H1 (cell line): ENCODE measurements at regions of chr6 and their contacts with region 1.

Region 1: GRCh38 chr6:32933636-32934085 is 7.2 kb downstream of the HLA-DMB start:
- DNase-seq: peak in 1 of 2 experiments; percentile 89
- H3K4me3 ChIP-seq: no peak overlapping the region
- H3K27ac ChIP-seq: no peak overlapping the region
- H3K4me1 ChIP-seq: no peaks in the 10 kb centered on the region
- H3K27me3 ChIP-seq: no peaks in the 10 kb centered on the region
- CTCF ChIP-seq: peak; percentile 75 to 84 (median 82)
- EP300 ChIP-seq: no peak
- POLR2A ChIP-seq: no peak
- RAD21 ChIP-seq: peak; percentile 59 to 73

Region 2: DNA sequence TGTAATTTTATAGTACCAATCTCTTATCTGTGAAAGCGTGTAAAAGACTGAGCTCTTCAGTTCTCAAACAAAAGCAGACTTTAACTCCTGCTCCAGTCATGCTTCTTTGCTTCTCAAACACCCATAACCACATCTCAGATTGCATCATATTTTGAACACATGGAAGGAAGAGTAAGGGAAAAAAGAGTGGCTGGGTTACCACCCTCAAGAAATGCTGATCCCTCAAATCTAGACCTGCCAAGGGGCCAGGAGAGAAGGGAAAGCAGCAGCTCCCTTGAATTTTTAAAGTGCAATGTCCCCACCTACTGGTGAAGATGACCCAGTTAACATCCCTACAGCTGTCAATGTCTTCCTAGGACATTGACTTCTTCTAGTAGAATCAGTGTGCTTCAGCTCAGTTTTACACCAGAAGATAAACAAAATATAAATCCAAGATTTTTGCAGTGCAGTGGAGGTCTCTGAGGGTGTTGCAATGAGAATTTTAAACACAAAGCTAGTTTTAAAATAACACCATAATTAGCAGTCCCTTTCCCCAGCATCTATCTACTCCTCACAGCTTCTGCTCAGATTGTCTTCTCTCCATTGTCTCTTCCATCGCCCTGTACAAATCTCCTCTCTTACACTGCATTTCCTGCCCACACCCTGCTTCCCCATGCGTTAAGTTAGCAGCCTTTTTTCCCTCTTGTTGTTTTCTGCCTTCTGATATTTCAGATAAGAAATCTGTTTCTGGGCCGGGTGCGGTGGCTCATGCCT is 147.7 kb before region 1 on chr6:
- CTCF ChIA-PET with region 1: no interaction called
- POLR2A ChIA-PET with region 1: no interaction called
- DNase-seq: peak in 1 of 2 experiments; percentile 49
- H3K4me3 ChIP-seq: no peak overlapping the region
- H3K27ac ChIP-seq: no peak overlapping the region
- H3K4me1 ChIP-seq: no peaks in the 10 kb centered on the region; a peak in 1 of 7 replicates
- H3K27me3 ChIP-seq: no peaks in the 10 kb centered on the region
- CTCF ChIP-seq: peak; percentile 15 to 75 (median 66)
- EP300 ChIP-seq: no peak
- POLR2A ChIP-seq: no peak
- RAD21 ChIP-seq: peak; percentile 86 to 88

Region 3: GRCh38 chr6:32906539-32906938 is 27.1 kb before region 1 on chr6:
- CTCF ChIA-PET with region 1: interaction called, 14 read pairs
- POLR2A ChIA-PET with region 1: interaction called, 3 read pairs
- DNase-seq: no peak
- H3K4me3 ChIP-seq: no peak overlapping the region
- H3K27ac ChIP-seq: no peak overlapping the region
- H3K4me1 ChIP-seq: no peaks in the 10 kb centered on the region
- H3K27me3 ChIP-seq: no peaks in the 10 kb centered on the region
- CTCF ChIP-seq: no peak
- EP300 ChIP-seq: no peak
- POLR2A ChIP-seq: no peak
- RAD21 ChIP-seq: no peak

Region 4: GRCh38 chr6:32912951-32913350 is 20.7 kb before region 1 on chr6:
- CTCF ChIA-PET with region 1: interaction called, 70 read pairs
- POLR2A ChIA-PET with region 1: interaction called, 3 read pairs
- DNase-seq: no peak
- H3K4me3 ChIP-seq: no peak overlapping the region
- H3K27ac ChIP-seq: no peak overlapping the region
- H3K4me1 ChIP-seq: no peaks in the 10 kb centered on the region
- H3K27me3 ChIP-seq: peaks cover 0 to 1% (median 0%) of the 10 kb centered on the region in 4 experiments; a peak in 1 of 7 replicates
- CTCF ChIP-seq: no peak
- EP300 ChIP-seq: no peak
- POLR2A ChIP-seq: no peak
- RAD21 ChIP-seq: no peak

Region 5: GRCh38 chr6:32920715-32921114 is 12.9 kb before region 1 on chr6:
- CTCF ChIA-PET with region 1: interaction called, 70 read pairs
- POLR2A ChIA-PET with region 1: interaction called, 3 read pairs
- DNase-seq: no peak
- H3K4me3 ChIP-seq: no peak overlapping the region
- H3K27ac ChIP-seq: no peak overlapping the region
- H3K4me1 ChIP-seq: no peaks in the 10 kb centered on the region
- H3K27me3 ChIP-seq: peaks cover 0 to 1% (median 0%) of the 10 kb centered on the region in 4 experiments; a peak in 1 of 7 replicates
- CTCF ChIP-seq: no peak
- EP300 ChIP-seq: no peak
- POLR2A ChIP-seq: no peak
- RAD21 ChIP-seq: no peak

Region 6: DNA sequence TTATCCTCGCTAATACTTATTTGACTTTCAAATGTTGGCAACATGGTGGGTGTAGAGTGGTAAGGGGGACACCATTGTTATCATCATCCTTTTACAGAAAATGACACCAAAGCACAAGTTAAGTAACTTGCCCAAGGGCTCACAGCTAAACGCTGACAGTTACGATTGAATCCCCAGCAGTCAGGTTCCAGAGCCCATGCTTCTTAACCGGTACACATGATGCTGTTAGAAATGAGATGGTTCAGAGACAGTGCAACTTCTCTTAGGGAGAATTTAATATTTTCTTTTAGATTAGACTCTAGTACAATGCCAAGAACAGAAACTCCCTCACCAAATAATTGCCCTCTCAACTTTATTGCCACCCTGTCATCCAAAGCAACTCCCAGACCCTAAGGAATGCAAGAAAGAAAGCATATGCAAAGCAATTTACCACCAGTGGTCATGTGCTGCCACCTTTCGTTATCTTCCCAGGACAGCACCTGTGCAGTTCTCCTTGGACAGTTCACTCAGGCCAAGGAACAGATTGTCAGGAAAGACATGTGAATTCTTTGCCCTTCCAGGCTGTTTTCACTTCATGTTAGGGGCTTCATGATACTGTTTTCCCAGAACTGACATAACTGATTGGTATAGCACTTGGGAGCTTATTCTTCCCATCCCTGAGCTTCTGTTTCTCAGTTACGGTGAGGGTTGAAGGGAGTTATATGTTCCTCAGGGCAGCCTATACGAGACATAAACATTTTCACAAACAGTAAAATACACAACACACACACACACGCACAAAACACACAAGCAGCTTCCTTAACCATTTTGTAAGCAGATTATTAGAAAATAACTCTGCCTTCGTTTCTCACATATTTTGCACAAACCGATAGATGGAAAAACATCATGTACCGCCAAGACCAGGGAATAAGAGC is 14.1 kb after region 1 on chr6:
- CTCF ChIA-PET with region 1: interaction called, 160 read pairs
- POLR2A ChIA-PET with region 1: interaction called, 4 read pairs
- DNase-seq: peak; percentile 15 to 63
- H3K4me3 ChIP-seq: no peak overlapping the region
- H3K27ac ChIP-seq: no peak overlapping the region
- H3K4me1 ChIP-seq: peaks cover 0 to 8% (median 3%) of the 10 kb centered on the region in 4 experiments; a peak in 5 of 7 replicates
- H3K27me3 ChIP-seq: no peaks in the 10 kb centered on the region; a peak in 1 of 7 replicates
- CTCF ChIP-seq: peak; percentile 60 to 92 (median 91)
- EP300 ChIP-seq: no peak
- POLR2A ChIP-seq: no peak
- RAD21 ChIP-seq: peak; percentile 95 to 96

Region 7: GRCh38 chr6:32952817-32953739 is 19.4 kb after region 1 on chr6 and contains the start of gene HLA-DMA:
- CTCF ChIA-PET with region 1: interaction called, 160 read pairs
- POLR2A ChIA-PET with region 1: interaction called, 4 read pairs
- DNase-seq: peak; percentile 82 to 88
- H3K4me3 ChIP-seq: no peak within 1 kb of the TSS
- H3K27ac ChIP-seq: no peak within 1 kb of the TSS
- H3K4me1 ChIP-seq: peaks cover 0 to 13% (median 3%) of the 10 kb centered on the region in 4 experiments; a peak in 5 of 7 replicates
- H3K27me3 ChIP-seq: no peaks in the 10 kb centered on the region; a peak in 1 of 7 replicates
- CTCF ChIP-seq: peak; percentile 81 to 93 (median 82)
- EP300 ChIP-seq: no peak
- POLR2A ChIP-seq: no peak
- RAD21 ChIP-seq: peak; percentile 38 to 59
- total RNA-seq, gene HLA-DMA: 13.3 and 15.1 TPM in 2 replicates

Region 8: GRCh38 chr6:33000055-33000454 is 66.4 kb after region 1 on chr6:
- CTCF ChIA-PET with region 1: interaction called, 12 read pairs
- POLR2A ChIA-PET with region 1: no interaction called
- DNase-seq: peak in 1 of 2 experiments; percentile 41
- H3K4me3 ChIP-seq: no peak overlapping the region
- H3K27ac ChIP-seq: no peak overlapping the region
- H3K4me1 ChIP-seq: no peaks in the 10 kb centered on the region
- H3K27me3 ChIP-seq: peaks cover 0 to 2% (median 0%) of the 10 kb centered on the region in 4 experiments; a peak in 2 of 7 replicates
- CTCF ChIP-seq: peak; percentile 46 to 93 (median 91)
- EP300 ChIP-seq: no peak
- POLR2A ChIP-seq: no peak
- RAD21 ChIP-seq: peak; percentile 96 to 97